ENCODE measurements at regions of chr11 and their contacts with region 1.

Region 1: GRCh38 chr11:86174101-86175046 is 70.2 kb upstream of the EED start:
- DNase-seq: peak; percentile 98
- H3K4me3 ChIP-seq: no peak overlapping the region
- CTCF ChIP-seq: no peak

Region 2: DNA sequence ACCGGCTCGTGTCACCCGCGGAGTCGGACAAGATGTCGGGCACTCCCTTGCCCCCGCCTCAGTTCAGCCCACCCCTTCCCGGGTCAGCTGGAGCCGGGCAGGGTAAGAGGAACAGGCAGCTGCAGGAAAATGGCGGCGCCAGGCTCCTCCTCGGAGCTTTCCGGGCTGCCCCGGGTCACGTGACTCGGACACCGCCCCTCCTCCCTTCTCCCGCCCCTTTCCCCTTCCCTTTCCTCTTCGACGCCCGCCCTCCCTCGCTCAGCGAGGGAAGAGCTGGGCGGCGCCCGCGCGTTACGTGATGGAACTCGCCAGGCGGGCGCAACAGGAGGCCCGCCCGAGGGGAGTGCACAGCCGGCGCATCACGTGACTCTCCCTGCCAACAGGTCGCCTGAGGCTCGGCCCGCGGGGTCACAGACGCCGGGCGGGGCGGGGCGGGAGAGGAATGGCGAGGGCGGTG is 105.4 kb before region 1 on chr11 and contains the start of gene PICALM:
- CTCF ChIA-PET with region 1: interaction called, 3 read pairs
- POLR2A ChIA-PET with region 1: interaction called, 37 read pairs
- DNase-seq: peak; percentile 93
- H3K4me3 ChIP-seq: peak within 1 kb of the TSS; percentile 94
- CTCF ChIP-seq: no peak

Region 3: DNA sequence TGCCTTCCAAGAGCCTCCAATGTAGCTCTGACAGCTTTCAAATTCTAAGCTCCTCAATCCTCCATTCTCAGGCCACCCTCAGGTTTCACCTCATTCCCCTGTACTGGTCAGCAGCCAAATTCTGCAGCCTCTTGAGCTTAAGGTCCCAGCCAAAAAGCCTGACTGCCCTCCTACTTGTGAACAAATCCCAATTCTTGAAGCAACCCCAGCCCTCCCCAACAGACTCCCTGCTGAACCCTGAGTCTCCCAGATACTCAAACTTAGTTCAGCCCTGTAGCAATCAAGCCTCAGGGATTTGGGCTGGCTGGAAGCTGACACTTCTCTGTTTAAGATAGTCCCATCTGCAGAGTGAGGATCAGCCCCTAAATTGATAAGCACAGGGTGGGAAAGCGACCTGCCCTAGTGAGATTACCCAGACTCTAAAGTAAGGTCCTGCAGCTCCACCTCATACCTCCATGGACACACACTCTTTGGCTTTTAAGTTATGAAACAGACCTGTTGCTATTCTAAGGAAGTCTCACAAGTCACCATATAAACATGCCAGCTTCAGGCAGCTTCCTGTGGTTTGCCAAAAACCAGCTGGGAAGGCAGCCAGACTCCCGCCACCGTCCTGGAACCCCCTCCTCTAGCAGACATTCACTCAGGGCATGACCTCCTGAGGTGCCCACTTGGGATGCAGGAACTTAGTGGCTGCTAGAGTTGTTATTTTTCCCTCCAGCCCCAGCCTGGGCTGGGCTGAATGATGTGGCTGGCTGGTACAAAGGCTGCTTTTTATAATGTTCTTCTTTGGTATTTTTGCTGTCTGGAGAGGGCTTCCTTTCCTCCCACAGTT is 23.0 kb before region 1 on chr11:
- CTCF ChIA-PET with region 1: interaction called, 5 read pairs
- POLR2A ChIA-PET with region 1: interaction called, 15 read pairs
- DNase-seq: no peak
- H3K4me3 ChIP-seq: no peak overlapping the region
- CTCF ChIP-seq: no peak

Region 4: GRCh38 chr11:86162239-86162638 is 12.1 kb before region 1 on chr11:
- CTCF ChIA-PET with region 1: interaction called, 8 read pairs
- POLR2A ChIA-PET with region 1: interaction called, 11 read pairs
- DNase-seq: no peak
- H3K4me3 ChIP-seq: no peak overlapping the region
- CTCF ChIP-seq: no peak

Region 5: DNA sequence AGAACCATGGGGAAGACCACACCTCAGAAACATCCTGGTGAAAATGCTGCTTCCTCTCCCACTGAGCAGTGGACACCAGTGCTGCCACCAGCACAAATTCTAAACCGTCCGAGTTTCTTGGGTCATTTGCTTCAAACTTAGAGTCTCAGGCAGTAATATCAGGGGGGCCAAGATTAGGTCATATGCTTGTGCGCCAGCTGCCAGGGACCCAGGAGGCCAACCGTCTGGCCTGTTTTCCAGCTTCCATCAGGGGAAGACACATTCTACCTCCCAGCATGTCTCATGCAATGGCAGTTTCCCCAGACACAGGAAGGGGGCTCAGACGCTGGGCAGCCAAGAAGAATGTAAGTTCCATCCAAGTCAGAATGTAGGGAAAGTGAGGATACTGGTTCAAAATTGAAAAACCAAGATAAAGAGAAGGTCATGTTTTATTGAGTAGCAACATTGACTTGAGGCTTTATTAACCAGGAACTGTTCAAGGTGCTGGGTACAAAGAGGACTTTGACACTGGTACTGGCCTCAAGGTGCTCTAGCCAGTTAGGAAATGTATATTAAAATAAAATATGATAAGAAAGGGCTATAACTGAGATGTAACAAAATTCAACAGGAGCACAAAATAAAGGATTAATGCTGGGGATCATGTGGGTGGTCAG is 10.5 kb after region 1 on chr11:
- CTCF ChIA-PET with region 1: no interaction called
- POLR2A ChIA-PET with region 1: no interaction called
- DNase-seq: no peak
- H3K4me3 ChIP-seq: no peak overlapping the region
- CTCF ChIP-seq: no peak

Region 6: DNA sequence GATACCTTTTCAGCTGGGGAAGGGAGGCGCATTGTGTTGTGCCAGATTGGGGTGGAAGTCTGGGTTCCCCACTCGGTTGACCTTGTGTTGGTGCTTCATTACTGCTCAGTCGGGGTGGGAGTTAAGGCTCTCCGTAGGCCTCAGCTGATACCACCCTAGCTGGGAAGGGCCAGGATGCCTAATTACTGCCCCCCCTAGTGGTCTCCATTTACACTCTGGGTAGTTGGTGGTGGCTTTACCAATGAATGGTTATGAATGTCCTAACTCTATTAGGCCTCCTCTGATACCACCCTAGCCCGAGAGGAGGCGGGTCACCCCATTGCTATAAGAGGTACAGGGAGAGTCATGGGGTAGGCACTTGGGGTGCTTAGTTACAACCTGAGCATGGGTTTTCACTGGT is 100.1 kb after region 1 on chr11:
- CTCF ChIA-PET with region 1: no interaction called
- POLR2A ChIA-PET with region 1: no interaction called
- DNase-seq: no peak
- H3K4me3 ChIP-seq: no peak overlapping the region
- CTCF ChIP-seq: no peak

Region 7: DNA sequence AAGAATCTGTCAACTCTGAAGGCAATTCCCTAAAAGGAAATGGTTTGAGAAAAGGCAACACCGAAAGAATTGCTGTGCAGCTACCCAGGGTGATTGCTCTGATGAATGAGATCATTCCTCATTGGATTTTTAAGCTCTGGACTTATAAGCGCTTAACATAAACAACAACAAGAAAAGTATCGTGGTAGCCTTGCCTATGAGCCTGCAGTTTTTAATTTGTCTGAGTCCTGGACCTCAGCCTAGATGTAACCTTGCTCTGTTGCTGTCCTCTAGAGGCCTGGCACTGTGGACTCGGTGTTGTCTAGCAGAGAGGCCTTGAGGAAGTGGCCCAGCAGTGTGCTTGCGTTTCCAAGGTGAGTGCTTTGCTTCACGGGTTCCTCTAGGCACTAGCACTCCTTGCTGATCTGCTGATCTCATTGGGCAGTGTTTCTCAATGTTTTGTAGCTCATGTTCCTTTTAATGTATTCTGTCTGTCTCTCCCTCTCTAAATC is 220.7 kb after region 1 on chr11:
- CTCF ChIA-PET with region 1: no interaction called
- POLR2A ChIA-PET with region 1: no interaction called
- DNase-seq: no peak
- H3K4me3 ChIP-seq: peak overlapping the region; percentile 4; the same call in 1 of the 2 replicates
- CTCF ChIP-seq: no peak